PC-9 (cell line): ENCODE measurements at regions of chr5 and their contacts with region 1.

Region 1: DNA sequence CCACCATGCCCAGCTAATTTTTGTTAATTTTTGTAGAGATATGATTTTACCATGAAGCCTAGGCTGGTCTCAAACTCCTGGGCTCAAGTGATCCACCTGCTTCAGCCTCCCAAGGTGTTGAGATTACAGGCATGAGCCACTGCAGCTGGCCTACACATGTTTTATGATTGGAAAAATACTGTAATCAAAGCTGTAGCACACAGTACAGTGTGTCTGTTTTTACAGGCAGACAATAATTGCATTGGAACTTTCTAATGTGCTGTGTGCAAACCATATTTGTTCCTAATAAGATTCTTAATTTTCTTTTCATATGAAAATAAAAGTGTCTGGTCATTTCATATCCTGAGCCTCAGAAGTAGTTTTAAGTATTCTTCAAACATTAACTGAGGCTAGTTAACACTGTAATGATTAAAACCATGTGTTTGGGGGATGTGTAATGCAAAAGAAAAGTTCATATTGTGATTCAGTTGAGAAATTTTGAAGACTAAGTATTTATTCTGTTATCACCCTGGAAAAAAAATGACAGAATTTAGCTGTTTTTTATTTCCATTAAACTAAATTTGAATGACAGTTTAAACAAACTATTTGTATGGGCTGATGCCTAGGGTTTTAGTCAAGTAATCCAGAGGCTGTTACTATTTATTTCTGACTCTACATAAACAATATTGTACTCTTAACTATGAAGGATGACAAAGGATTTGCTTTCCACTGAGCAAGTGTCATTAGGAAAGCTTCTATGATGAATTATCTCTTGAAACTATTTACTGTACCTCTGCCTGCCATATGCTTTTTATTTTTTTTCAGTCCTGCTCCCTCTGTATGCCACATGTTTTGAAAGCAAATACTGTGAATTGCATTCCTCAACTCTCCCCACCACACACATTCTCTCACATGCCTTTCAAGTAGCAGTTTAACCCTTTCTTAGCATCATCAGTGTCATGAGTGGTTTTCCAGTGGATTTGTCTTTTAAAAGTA is 111.5 kb downstream of the MTREX start:
- DNase-seq: no peak
- H3K4me3 ChIP-seq: no peak overlapping the region
- H3K27ac ChIP-seq: no peak overlapping the region
- H3K4me1 ChIP-seq: peaks cover 17% of the 10 kb centered on the region
- H3K27me3 ChIP-seq: no peaks in the 10 kb centered on the region
- CTCF ChIP-seq: no peak

Region 2: DNA sequence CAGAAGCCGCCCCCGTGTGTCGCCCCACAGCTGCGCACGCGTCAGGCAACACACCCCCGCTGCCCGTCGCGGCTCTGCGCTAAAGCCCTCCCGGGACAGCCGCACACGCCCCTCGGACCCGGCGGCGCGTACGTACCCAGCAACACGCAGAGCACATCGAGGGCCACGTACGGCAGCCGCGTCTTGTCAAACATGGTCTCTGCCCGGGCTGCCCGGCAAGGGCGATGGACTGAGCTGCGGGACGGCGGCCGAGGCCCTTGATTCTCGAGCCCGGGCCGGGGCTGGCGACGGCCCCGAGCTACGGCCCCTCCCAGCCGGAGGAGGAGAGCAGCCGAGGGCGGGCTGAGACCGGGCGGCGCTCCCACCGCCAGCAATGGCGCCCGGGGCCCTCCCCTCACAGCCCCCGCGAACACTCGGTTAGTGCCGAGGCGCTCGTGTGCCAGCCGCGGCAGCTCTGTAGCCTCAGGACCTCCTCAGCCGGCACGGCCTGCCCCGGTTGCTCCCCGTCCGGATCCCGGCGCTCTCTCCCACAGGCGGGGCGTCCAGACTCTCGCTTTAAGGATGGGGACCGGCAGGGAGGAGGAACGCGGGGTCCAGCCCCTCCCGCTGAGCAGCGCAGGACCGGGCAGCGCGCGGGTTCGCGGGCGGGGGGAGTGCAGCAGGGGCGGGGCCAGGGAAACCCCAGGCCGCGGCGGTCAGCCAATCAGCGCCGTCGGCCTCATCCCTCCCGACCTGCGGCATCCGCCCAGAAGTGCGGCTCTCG is 115.3 kb after region 1 on chr5 and contains the start of gene PLPP1:
- CTCF ChIA-PET with region 1: no interaction called
- POLR2A ChIA-PET with region 1: no interaction called
- intact Hi-C with region 1: loop called (anchors 10 kb)
- DNase-seq: peak; percentile 72 to 92
- H3K4me3 ChIP-seq: peak within 1 kb of the TSS; percentile 95
- H3K27ac ChIP-seq: peak within 1 kb of the TSS; percentile 45
- H3K4me1 ChIP-seq: peaks cover 14% of the 10 kb centered on the region; the same call in 1 of the 2 replicates
- H3K27me3 ChIP-seq: no peaks in the 10 kb centered on the region
- CTCF ChIP-seq: no peak
- total RNA-seq, gene PLPP1: 12.2 and 18.4 TPM in 2 replicates